CD4-positive, alpha-beta T cell (primary cell): ENCODE measurements at regions of chr4 and their contacts with region 1.

Region 1: GRCh38 chr4:47485047-47485692 is at the start of gene ATP10D:
- DNase-seq: peak; percentile 40 to 87 (median 65)
- ATAC-seq: peak; percentile 93
- H3K4me3 ChIP-seq: peak within 1 kb of the TSS; percentile 80
- H3K4me3 Mint-ChIP-seq: peak within 1 kb of the TSS; percentile 97
- H3K27ac ChIP-seq: peak within 1 kb of the TSS; percentile 16 to 58
- H3K27ac Mint-ChIP-seq: peak within 1 kb of the TSS; percentile 81
- H3K4me1 ChIP-seq: peaks cover 13% of the 10 kb centered on the region
- H3K4me1 Mint-ChIP-seq: peaks cover 30% of the 10 kb centered on the region
- H3K27me3 ChIP-seq: no peaks in the 10 kb centered on the region
- H3K27me3 Mint-ChIP-seq: no peaks in the 10 kb centered on the region
- CTCF ChIP-seq: peak; percentile 10
- total RNA-seq, gene ATP10D: 1.1 to 1.7 TPM

Region 2: DNA sequence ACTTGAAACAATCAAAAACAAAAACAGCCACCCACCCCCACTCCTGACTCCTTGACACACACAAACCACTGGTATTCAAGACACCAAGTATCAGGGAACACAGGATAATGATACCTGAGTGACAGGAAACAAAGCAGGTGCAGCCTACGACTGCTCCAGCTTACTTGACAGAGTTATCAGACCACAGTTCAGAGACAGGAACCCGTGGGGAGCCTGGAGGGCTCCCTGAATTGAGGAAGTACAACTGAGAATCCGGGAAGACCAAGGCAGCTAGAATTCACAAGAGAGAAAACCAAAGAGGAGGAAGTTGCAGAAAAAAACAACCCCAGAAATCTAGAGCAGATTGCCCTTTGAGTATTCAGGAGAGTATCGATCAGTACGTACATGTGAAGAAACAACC is 42.2 kb before region 1 on chr4:
- CTCF ChIA-PET with region 1: no interaction called
- POLR2A ChIA-PET with region 1: no interaction called
- intact Hi-C with region 1: no loop called
- DNase-seq: peak in 2 of 14 experiments; percentile 19 to 22
- ATAC-seq: no peak
- H3K4me3 ChIP-seq: no peak overlapping the region
- H3K4me3 Mint-ChIP-seq: no peak overlapping the region
- H3K27ac ChIP-seq: no peak overlapping the region
- H3K27ac Mint-ChIP-seq: no peak overlapping the region
- H3K4me1 ChIP-seq: no peaks in the 10 kb centered on the region
- H3K4me1 Mint-ChIP-seq: peaks cover 10% of the 10 kb centered on the region
- H3K27me3 ChIP-seq: no peaks in the 10 kb centered on the region
- H3K27me3 Mint-ChIP-seq: no peaks in the 10 kb centered on the region
- CTCF ChIP-seq: no peak

Region 3: DNA sequence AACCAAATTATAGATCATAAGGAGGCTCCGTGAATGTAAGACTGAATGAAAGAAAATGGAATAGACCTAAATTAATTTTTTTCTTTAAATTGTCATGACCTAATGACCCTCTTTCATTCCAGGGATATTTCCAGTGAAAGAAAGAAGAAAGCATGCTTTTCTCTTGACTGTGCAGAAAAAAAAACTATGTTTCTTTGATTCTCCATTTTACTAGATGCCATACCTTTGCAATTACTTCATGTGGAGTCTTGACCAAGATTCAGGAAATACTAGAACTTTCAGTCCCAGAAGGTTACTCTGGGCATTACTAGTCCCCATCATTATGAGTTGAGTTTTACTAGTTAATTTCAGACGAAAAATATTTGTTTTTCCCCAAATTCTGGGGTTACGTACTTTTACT is 15.2 kb before region 1 on chr4:
- CTCF ChIA-PET with region 1: interaction called, 3 read pairs
- POLR2A ChIA-PET with region 1: interaction called, 12 read pairs
- intact Hi-C with region 1: loop called in 1 of 2 experiments (anchors 2 kb)
- DNase-seq: no peak
- ATAC-seq: no peak
- H3K4me3 ChIP-seq: no peak overlapping the region
- H3K4me3 Mint-ChIP-seq: no peak overlapping the region
- H3K27ac ChIP-seq: no peak overlapping the region
- H3K27ac Mint-ChIP-seq: no peak overlapping the region
- H3K4me1 ChIP-seq: no peaks in the 10 kb centered on the region
- H3K4me1 Mint-ChIP-seq: no peaks in the 10 kb centered on the region
- H3K27me3 ChIP-seq: peaks cover 0 to 3% of the 10 kb centered on the region in 2 experiments
- H3K27me3 Mint-ChIP-seq: peaks cover 6% of the 10 kb centered on the region
- CTCF ChIP-seq: no peak

Region 4: DNA sequence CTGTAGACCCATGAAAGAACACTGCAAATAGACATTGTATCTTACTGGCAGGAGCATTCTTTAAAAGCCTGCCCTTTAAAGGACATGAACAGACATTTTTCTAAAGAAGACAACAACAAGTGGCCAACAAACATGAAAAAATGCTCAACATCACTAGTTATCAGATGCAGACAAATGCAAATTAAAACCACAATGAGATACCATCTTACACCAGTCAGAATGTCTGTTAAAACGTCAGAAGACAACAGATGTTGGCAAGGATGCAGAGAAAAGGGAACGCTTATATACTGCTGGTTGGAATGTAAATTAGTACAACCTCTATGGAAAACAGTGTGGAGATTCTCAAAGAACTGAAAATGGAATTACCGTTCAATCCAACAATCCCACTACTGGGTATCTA is 77.1 kb after region 1 on chr4:
- CTCF ChIA-PET with region 1: no interaction called
- POLR2A ChIA-PET with region 1: no interaction called
- intact Hi-C with region 1: loop called in 1 of 2 experiments (anchors 10 kb)
- DNase-seq: peak in 3 of 14 experiments; percentile 11 to 19 (median 11)
- ATAC-seq: no peak
- H3K4me3 ChIP-seq: no peak overlapping the region
- H3K4me3 Mint-ChIP-seq: no peak overlapping the region
- H3K27ac ChIP-seq: no peak overlapping the region
- H3K27ac Mint-ChIP-seq: no peak overlapping the region
- H3K4me1 ChIP-seq: no peaks in the 10 kb centered on the region
- H3K4me1 Mint-ChIP-seq: peaks cover 9% of the 10 kb centered on the region
- H3K27me3 ChIP-seq: no peaks in the 10 kb centered on the region
- H3K27me3 Mint-ChIP-seq: no peaks in the 10 kb centered on the region
- CTCF ChIP-seq: no peak